Activated CD4-positive, alpha-beta T cell treated with anti-CD3 and anti-CD28 coated beads for 36 hours (primary cell): ENCODE measurements at regions of chr10 and their contacts with region 1.

Region 1: DNA sequence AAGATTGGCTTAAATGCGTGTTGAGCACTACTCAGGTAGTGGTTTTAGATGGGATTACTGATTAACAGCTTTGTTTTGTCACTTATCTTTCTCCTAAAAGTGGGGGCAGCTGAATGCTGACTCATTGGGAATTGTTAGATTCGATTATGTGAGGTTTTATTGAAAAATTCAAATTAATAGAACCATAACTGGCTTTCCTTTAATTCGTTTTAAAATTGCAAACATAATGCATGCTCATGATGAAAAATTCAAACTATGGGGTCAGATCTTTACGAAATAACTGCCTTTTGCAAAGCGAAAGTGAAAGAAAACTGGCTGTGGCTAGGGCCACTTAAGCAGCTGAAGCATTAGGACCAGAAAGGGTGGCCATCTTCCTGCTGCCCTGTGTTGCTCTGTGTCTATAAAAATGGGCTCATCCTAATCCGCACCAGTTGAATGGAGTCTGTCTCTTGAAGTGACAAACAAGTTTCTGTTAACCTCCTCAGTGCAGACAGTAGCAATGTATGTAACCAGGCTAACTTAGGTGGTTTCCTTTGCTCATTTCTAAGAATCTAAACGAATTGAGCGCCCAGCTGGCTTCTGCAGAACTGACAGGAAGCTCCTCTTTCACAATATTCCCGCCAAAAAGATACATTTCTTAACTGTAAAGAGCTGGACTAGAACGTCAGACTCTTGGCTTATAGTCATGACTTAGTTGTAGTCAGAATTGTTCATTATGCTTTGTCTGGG is 27.8 kb downstream of the DENND10 start:
- DNase-seq: peak; percentile 75
- ATAC-seq: peak; percentile 84
- H3K4me3 Mint-ChIP-seq: peak overlapping the region; percentile 78
- H3K27ac Mint-ChIP-seq: peak overlapping the region; percentile 99
- H3K4me1 Mint-ChIP-seq: peaks cover 50% of the 10 kb centered on the region
- H3K27me3 Mint-ChIP-seq: no peaks in the 10 kb centered on the region

Region 2: GRCh38 chr10:118966076-118966849 is 165.4 kb before region 1 on chr10:
- CTCF ChIA-PET with region 1: no interaction called
- POLR2A ChIA-PET with region 1: no interaction called
- intact Hi-C with region 1: no loop called
- DNase-seq: no peak
- ATAC-seq: no peak
- H3K4me3 Mint-ChIP-seq: no peak overlapping the region
- H3K27ac Mint-ChIP-seq: no peak overlapping the region
- H3K4me1 Mint-ChIP-seq: no peaks in the 10 kb centered on the region
- H3K27me3 Mint-ChIP-seq: peaks cover 11% of the 10 kb centered on the region

Region 3: GRCh38 chr10:119165171-119166110 is 33.8 kb after region 1 on chr10 and contains the start of gene SFXN4:
- CTCF ChIA-PET with region 1: interaction called, 3 read pairs
- POLR2A ChIA-PET with region 1: no interaction called
- intact Hi-C with region 1: loop called in 1 of 2 experiments (anchors 1 kb)
- DNase-seq: peak; percentile 87
- ATAC-seq: peak; percentile 94
- H3K4me3 Mint-ChIP-seq: peak within 1 kb of the TSS; percentile 86
- H3K27ac Mint-ChIP-seq: peak within 1 kb of the TSS; percentile 94
- H3K4me1 Mint-ChIP-seq: peaks cover 40% of the 10 kb centered on the region
- H3K27me3 Mint-ChIP-seq: no peaks in the 10 kb centered on the region
- total RNA-seq, gene SFXN4: 38.7 to 44.7 TPM

Region 4: DNA sequence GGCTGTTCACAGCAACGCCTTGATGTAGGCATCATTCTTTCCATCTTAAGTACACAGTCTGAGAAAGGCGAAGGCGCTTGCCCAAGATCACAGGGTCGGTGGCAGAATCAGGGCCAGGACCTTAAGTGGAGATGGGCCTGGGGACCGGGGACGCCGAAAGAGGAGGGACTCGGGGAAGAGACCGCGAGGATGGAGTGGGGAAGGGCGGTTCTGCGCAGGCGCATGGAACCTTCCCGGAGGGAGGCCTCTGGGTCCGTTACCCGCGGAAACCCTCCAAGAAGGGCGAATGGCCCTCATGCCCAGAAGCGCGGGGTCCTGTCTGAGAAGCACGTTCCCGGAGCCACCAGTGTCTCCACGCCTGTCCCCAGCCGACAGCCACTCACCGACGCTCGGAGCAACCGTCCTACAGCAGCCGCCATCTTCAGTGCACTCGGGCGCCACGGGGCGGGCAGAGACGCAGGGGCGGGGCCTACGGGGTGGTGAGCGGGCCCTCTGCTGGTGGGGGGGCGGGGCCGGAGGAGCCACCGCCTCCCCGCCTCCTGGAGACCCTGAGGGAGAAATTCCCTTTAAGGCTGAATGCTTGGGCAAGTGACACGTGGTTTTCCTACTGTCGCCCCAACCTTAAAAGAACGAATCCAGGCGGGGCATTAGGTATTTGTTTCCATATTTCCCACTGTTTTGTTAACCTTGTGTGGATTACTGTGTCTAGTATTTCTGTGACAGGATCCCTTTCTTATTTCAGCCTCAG is 46.9 kb after region 1 on chr10 and contains the start of gene PRDX3:
- CTCF ChIA-PET with region 1: interaction called, 5 read pairs
- POLR2A ChIA-PET with region 1: no interaction called
- intact Hi-C with region 1: loop called (anchors 1 kb)
- DNase-seq: peak; percentile 98
- ATAC-seq: peak; percentile 95
- H3K4me3 Mint-ChIP-seq: peak within 1 kb of the TSS; percentile 88
- H3K27ac Mint-ChIP-seq: peak within 1 kb of the TSS; percentile 95
- H3K4me1 Mint-ChIP-seq: peaks cover 36% of the 10 kb centered on the region
- H3K27me3 Mint-ChIP-seq: no peaks in the 10 kb centered on the region
- total RNA-seq, gene PRDX3: 160 to 217 TPM

Region 5: GRCh38 chr10:119496273-119496672 is 364.6 kb after region 1 on chr10:
- CTCF ChIA-PET with region 1: no interaction called
- POLR2A ChIA-PET with region 1: no interaction called
- intact Hi-C with region 1: loop called in 1 of 2 experiments (anchors 5 kb)
- DNase-seq: peak; percentile 83
- ATAC-seq: peak; percentile 74
- H3K4me3 Mint-ChIP-seq: no peak overlapping the region
- H3K27ac Mint-ChIP-seq: peak overlapping the region; percentile 75
- H3K4me1 Mint-ChIP-seq: peaks cover 86% of the 10 kb centered on the region
- H3K27me3 Mint-ChIP-seq: no peaks in the 10 kb centered on the region